Breast epithelium (tissue), 4 donors: ENCODE measurements at regions of chr13 and their contacts with region 1.

Region 1: DNA sequence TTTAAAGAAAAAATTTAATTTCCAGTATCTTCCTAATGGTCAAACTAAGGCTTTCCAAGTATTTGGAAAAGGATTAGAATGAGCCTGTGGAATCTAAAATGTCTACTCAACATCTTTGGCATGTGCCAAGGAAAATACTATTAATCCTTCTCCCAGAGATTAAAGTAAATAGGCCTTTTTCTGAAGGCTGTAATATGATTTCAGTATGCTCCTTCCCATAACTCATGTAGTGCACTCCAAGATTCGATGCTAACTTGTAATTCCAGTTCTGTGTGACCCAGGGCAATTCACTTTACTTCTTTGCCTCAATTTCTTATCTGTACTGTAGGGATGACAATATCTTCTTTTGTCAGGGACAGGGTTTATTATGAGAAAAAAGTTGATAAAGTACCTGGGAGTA is 196.9 kb downstream of the ZIC5 start:
- DNase-seq: no peak
- H3K4me3 ChIP-seq: no peak overlapping the region
- H3K27ac ChIP-seq: no peak overlapping the region
- H3K4me1 ChIP-seq: no peaks in the 10 kb centered on the region
- H3K27me3 ChIP-seq: no peaks in the 10 kb centered on the region
- CTCF ChIP-seq: no peak
- POLR2A ChIP-seq: no peak

Region 2: GRCh38 chr13:98189841-98190505 is 1584.7 kb before region 1 on chr13:
- intact Hi-C with region 1: loop called (anchors 10 kb)
- DNase-seq: no peak
- H3K4me3 ChIP-seq: no peak overlapping the region
- H3K27ac ChIP-seq: no peak overlapping the region
- H3K4me1 ChIP-seq: no peaks in the 10 kb centered on the region
- H3K27me3 ChIP-seq: no peaks in the 10 kb centered on the region
- CTCF ChIP-seq: no peak
- POLR2A ChIP-seq: no peak

Region 3: GRCh38 chr13:100306030-100306429 is 531.4 kb after region 1 on chr13:
- intact Hi-C with region 1: no loop called
- DNase-seq: no peak
- H3K4me3 ChIP-seq: no peak overlapping the region
- H3K27ac ChIP-seq: no peak overlapping the region
- H3K4me1 ChIP-seq: no peaks in the 10 kb centered on the region
- H3K27me3 ChIP-seq: no peaks in the 10 kb centered on the region
- CTCF ChIP-seq: no peak
- POLR2A ChIP-seq: no peak